ENCODE measurements at regions of chrX and their contacts with region 1.

Region 1: GRCh38 chrX:153539171-153539978 is 21.9 kb downstream of the ATP2B3 start:
- DNase-seq: no peak
- ATAC-seq: peak; percentile 96
- H3K4me3 ChIP-seq: no peak overlapping the region
- H3K27ac ChIP-seq: no peak overlapping the region
- H3K4me1 ChIP-seq: no peaks in the 10 kb centered on the region
- H3K27me3 ChIP-seq: no peaks in the 10 kb centered on the region
- CTCF ChIP-seq: peak; percentile 85 to 91 (median 88)
- EP300 ChIP-seq: no peak
- POLR2A ChIP-seq: no peak
- RAD21 ChIP-seq: peak; percentile 65

Region 2: GRCh38 chrX:153649178-153649914 is 110.0 kb after region 1 on chrX:
- CTCF ChIA-PET with region 1: interaction called, 8 read pairs
- POLR2A ChIA-PET with region 1: no interaction called
- RAD21 ChIA-PET with region 1: interaction called, 5 read pairs
- SMC1A ChIA-PET with region 1: interaction called, 3 read pairs
- in situ Hi-C with region 1: loop called (anchors 10 kb)
- intact Hi-C with region 1: no loop called
- DNase-seq: no peak
- ATAC-seq: peak; percentile 93
- H3K4me3 ChIP-seq: no peak overlapping the region
- H3K27ac ChIP-seq: no peak overlapping the region
- H3K4me1 ChIP-seq: no peaks in the 10 kb centered on the region
- H3K27me3 ChIP-seq: peaks cover 0 to 2% of the 10 kb centered on the region in 2 experiments; a peak in 2 of 4 replicates
- CTCF ChIP-seq: peak; percentile 46 to 64 (median 61)
- EP300 ChIP-seq: no peak
- POLR2A ChIP-seq: no peak
- RAD21 ChIP-seq: peak; percentile 83

Region 3: DNA sequence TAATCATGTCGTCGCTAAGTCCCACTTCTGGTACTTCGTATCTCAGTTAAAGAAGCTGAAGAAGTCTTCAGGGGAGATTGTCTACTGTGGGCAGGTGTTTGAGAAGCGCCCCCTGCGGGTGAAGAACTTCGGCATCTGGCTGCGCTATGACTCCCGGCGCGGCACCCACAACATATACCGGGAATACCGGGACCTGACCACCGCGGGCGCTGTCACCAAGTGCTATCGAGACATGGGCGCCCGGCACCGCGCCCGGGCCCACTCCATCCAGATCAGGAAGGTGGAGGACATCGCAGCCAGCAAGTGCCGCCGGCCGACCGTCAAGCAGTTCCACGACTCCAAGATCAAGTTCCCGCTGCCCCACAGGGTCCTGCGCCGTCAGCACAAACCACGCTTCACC is 122.9 kb after region 1 on chrX:
- CTCF ChIA-PET with region 1: interaction called, 25 read pairs
- POLR2A ChIA-PET with region 1: no interaction called
- RAD21 ChIA-PET with region 1: interaction called, 26 read pairs
- SMC1A ChIA-PET with region 1: interaction called, 9 read pairs
- in situ Hi-C with region 1: loop called (anchors 10 kb)
- intact Hi-C with region 1: no loop called
- DNase-seq: no peak
- ATAC-seq: no peak
- H3K4me3 ChIP-seq: no peak overlapping the region
- H3K27ac ChIP-seq: no peak overlapping the region
- H3K4me1 ChIP-seq: no peaks in the 10 kb centered on the region
- H3K27me3 ChIP-seq: no peaks in the 10 kb centered on the region
- CTCF ChIP-seq: peak; percentile 23 to 35 (median 35); a peak in 5 of 6 replicates
- EP300 ChIP-seq: no peak
- POLR2A ChIP-seq: no peak
- RAD21 ChIP-seq: peak; percentile 39

Region 4: GRCh38 chrX:153944140-153944799 is 404.9 kb after region 1 on chrX and contains the start of gene RENBP:
- CTCF ChIA-PET with region 1: no interaction called
- POLR2A ChIA-PET with region 1: no interaction called
- RAD21 ChIA-PET with region 1: no interaction called
- SMC1A ChIA-PET with region 1: no interaction called
- in situ Hi-C with region 1: no loop called
- intact Hi-C with region 1: no loop called
- DNase-seq: no peak
- ATAC-seq: peak; percentile 47
- H3K4me3 ChIP-seq: peak within 1 kb of the TSS; percentile 47; the same call in 1 of the 2 replicates
- H3K27ac ChIP-seq: no peak within 1 kb of the TSS
- H3K4me1 ChIP-seq: no peaks in the 10 kb centered on the region
- H3K27me3 ChIP-seq: no peaks in the 10 kb centered on the region
- CTCF ChIP-seq: no peak
- EP300 ChIP-seq: no peak
- POLR2A ChIP-seq: no peak
- RAD21 ChIP-seq: no peak
- polyA plus RNA-seq, gene RENBP: not detected

Measured in GM12878 (cell line).